Stomach (tissue), 19 donors: ENCODE measurements at regions of chr7 and their contacts with region 1.

Region 1: GRCh38 chr7:32204361-32205018 is 134.3 kb upstream of the PDE1C start:
- DNase-seq: peak; percentile 58 to 87
- H3K4me3 ChIP-seq: peak overlapping the region; percentile 21 to 38 (median 34)
- H3K27ac ChIP-seq: no peak overlapping the region
- H3K4me1 ChIP-seq: peaks cover 0 to 10% (median 0%) of the 10 kb centered on the region in 4 donors
- H3K27me3 ChIP-seq: no peaks in the 10 kb centered on the region
- CTCF ChIP-seq: peak in 5 of 7 experiments; percentile 65 to 87 (median 75)
- EP300 ChIP-seq: no peak
- POLR2A ChIP-seq: no peak

Region 2: DNA sequence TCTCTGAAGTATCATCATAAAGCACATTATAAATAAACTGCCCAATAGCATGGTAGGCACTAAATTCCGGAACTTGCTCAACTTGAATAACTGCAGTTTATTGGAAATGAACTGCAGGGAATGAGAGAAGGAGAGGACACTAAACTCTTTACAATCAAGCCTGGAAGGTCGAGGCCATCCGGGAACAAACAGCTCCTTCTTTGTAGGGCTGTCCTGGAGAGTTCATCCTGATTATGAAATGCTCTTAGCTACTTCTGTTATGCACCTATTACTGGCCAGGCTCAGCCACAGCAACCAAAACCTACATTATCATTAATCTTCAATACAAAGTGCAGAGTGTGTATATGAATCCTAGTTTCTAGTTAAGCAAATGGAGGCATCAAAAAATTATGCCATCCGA is 452.8 kb before region 1 on chr7:
- intact Hi-C with region 1: loop called (anchors 5 kb)
- DNase-seq: no peak
- H3K4me3 ChIP-seq: no peak overlapping the region
- H3K27ac ChIP-seq: no peak overlapping the region
- H3K4me1 ChIP-seq: no peaks in the 10 kb centered on the region
- H3K27me3 ChIP-seq: no peaks in the 10 kb centered on the region
- CTCF ChIP-seq: no peak
- EP300 ChIP-seq: no peak
- POLR2A ChIP-seq: no peak

Region 3: DNA sequence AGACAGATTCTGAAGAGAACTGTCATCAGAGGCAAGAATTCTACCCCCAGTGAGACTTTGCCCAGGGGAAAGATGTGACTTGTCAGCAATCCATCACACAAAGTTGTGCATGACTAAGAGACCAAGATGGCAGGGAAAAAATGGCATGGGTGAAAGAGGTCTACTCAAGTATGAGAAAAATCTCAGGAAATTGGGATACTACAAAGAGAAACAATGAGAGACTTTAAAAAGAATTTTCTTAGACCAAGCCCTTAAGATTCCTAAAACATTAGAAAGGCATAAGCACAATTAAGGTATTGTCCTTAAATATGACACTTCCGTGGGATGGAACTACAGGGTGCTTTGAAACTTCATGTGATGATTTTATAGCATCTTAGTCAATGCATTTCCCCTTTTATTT is 88.7 kb before region 1 on chr7:
- intact Hi-C with region 1: no loop called
- DNase-seq: no peak
- H3K4me3 ChIP-seq: no peak overlapping the region
- H3K27ac ChIP-seq: no peak overlapping the region
- H3K4me1 ChIP-seq: no peaks in the 10 kb centered on the region
- H3K27me3 ChIP-seq: no peaks in the 10 kb centered on the region
- CTCF ChIP-seq: no peak
- EP300 ChIP-seq: no peak
- POLR2A ChIP-seq: no peak

Region 4: GRCh38 chr7:32239764-32240163 is 35.3 kb after region 1 on chr7:
- intact Hi-C with region 1: no loop called
- DNase-seq: no peak
- H3K4me3 ChIP-seq: no peak overlapping the region
- H3K27ac ChIP-seq: no peak overlapping the region
- H3K4me1 ChIP-seq: no peaks in the 10 kb centered on the region
- H3K27me3 ChIP-seq: no peaks in the 10 kb centered on the region
- CTCF ChIP-seq: no peak
- EP300 ChIP-seq: no peak
- POLR2A ChIP-seq: no peak